ENCODE measurements at regions of chr14 and their contacts with region 1.

Region 1: GRCh38 chr14:24108336-24108874 is 6.2 kb upstream of the DCAF11 start:
- DNase-seq: no peak
- H3K4me3 Mint-ChIP-seq: peak overlapping the region; percentile 8
- H3K27ac Mint-ChIP-seq: peak overlapping the region; percentile 98
- H3K4me1 Mint-ChIP-seq: peaks cover 43% of the 10 kb centered on the region
- H3K27me3 Mint-ChIP-seq: no peaks in the 10 kb centered on the region

Region 2: GRCh38 chr14:24058260-24058950 is 50.0 kb before region 1 on chr14:
- CTCF ChIA-PET with region 1: interaction called, 164 read pairs
- POLR2A ChIA-PET with region 1: interaction called, 34 read pairs
- DNase-seq: peak; percentile 76
- H3K4me3 Mint-ChIP-seq: no peak overlapping the region
- H3K27ac Mint-ChIP-seq: peak overlapping the region; percentile 38
- H3K4me1 Mint-ChIP-seq: peaks cover 9% of the 10 kb centered on the region
- H3K27me3 Mint-ChIP-seq: peaks cover 8% of the 10 kb centered on the region

Region 3: GRCh38 chr14:24086193-24086955 is 22.0 kb before region 1 on chr14:
- CTCF ChIA-PET with region 1: interaction called, 254 read pairs
- POLR2A ChIA-PET with region 1: interaction called, 145 read pairs
- DNase-seq: no peak
- H3K4me3 Mint-ChIP-seq: no peak overlapping the region
- H3K27ac Mint-ChIP-seq: no peak overlapping the region
- H3K4me1 Mint-ChIP-seq: peaks cover 14% of the 10 kb centered on the region
- H3K27me3 Mint-ChIP-seq: peaks cover 11% of the 10 kb centered on the region

Region 4: GRCh38 chr14:24135834-24136542 is 27.6 kb after region 1 on chr14 and contains the start of gene PSME1:
- CTCF ChIA-PET with region 1: interaction called, 24 read pairs
- POLR2A ChIA-PET with region 1: interaction called, 448 read pairs
- DNase-seq: peak; percentile 96
- H3K4me3 Mint-ChIP-seq: peak within 1 kb of the TSS; percentile 93
- H3K27ac Mint-ChIP-seq: peak within 1 kb of the TSS; percentile 89
- H3K4me1 Mint-ChIP-seq: peaks cover 53% of the 10 kb centered on the region
- H3K27me3 Mint-ChIP-seq: no peaks in the 10 kb centered on the region
- total RNA-seq, gene PSME1: 391 to 397 TPM

Region 5: DNA sequence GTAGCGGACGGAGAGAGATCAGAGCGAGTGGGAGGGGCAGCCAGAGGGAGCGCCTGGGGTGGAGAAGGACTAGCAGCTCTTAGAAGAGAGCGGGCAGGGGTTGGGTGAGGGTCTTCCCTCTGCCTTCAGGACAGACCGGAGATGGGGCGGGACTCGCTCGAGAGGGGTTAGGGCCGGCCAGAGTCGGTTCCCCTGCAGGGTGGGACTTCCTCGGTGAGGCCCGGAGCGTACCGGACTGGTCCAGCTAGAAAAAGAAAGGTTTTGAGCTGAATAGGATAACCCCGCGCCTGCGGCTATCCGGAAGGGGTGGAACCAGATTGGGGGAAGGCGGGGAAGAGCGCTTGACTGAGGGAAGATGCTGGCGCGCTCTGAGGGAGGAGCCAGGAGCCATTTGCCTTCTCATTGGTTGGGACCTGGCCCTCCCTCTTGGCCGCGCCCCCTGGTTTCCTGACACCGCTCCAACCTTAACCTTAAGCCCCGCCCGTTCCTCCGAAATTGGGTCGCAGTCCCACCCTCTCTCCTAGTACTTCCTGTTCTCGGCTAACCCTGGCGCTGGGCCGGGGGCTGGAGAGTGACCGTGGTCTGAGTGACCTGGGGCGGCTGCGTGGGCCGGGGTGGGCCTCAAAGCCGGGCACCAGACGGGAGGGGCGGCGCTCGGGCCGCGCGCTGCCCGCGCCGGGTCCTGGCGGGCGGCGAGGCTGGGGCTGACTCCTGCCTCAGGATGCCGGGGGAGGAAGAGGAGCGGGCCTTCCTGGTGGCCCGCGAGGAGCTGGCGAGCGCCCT is 38.8 kb after region 1 on chr14 and contains the start of gene RNF31:
- CTCF ChIA-PET with region 1: interaction called, 12 read pairs
- POLR2A ChIA-PET with region 1: interaction called, 448 read pairs
- DNase-seq: peak; percentile 99
- H3K4me3 Mint-ChIP-seq: peak within 1 kb of the TSS; percentile 96
- H3K27ac Mint-ChIP-seq: peak within 1 kb of the TSS; percentile 99
- H3K4me1 Mint-ChIP-seq: peaks cover 58% of the 10 kb centered on the region
- H3K27me3 Mint-ChIP-seq: no peaks in the 10 kb centered on the region
- total RNA-seq, gene RNF31: 122 to 129 TPM